ENCODE measurements at regions of chr13 and their contacts with region 1.

Region 1: DNA sequence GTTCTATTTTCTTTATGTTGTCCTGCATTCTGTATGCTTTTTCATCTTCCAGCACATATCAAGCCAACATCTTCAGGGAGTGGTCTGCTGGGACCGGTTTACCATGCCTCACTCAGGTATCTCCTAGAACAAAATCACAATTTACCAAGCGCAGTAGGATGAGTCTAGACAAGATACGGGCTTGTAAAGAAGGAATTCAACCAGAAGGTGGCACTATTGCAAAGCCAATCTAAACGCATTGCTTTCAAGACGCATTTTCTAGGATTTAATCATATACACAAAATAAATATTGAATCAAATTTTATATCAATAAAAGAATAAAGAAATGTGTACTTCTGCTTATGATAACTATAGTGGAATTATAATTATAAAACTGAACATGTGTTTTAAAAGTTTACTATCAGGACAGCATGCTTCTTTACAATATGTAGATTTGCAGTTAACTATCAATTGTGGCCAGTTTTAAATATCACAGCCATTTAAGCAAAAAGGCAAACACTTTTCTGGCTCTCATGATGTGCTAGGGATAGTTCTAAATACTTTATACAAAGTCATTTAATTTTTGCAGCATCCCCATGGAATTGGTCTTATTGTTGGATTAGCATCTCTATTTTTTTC is 16.1 kb upstream of the TPP2 start:
- DNase-seq: peak in 7 of 9 donors; percentile 37 to 70 (median 63)
- ATAC-seq: peak; percentile 85
- H3K4me3 ChIP-seq: no peak overlapping the region
- H3K4me3 Mint-ChIP-seq: no peak overlapping the region
- H3K27ac ChIP-seq: no peak overlapping the region
- H3K27ac Mint-ChIP-seq: peak overlapping the region in 1 of 9 donors; percentile 57
- H3K4me1 ChIP-seq: peaks cover 0 to 8% of the 10 kb centered on the region in 2 donors
- H3K4me1 Mint-ChIP-seq: peaks cover 8 to 14% (median 10%) of the 10 kb centered on the region in 7 donors
- H3K27me3 ChIP-seq: no peaks in the 10 kb centered on the region
- H3K27me3 Mint-ChIP-seq: peaks cover 4 to 26% (median 5%) of the 10 kb centered on the region in 5 donors

Region 2: DNA sequence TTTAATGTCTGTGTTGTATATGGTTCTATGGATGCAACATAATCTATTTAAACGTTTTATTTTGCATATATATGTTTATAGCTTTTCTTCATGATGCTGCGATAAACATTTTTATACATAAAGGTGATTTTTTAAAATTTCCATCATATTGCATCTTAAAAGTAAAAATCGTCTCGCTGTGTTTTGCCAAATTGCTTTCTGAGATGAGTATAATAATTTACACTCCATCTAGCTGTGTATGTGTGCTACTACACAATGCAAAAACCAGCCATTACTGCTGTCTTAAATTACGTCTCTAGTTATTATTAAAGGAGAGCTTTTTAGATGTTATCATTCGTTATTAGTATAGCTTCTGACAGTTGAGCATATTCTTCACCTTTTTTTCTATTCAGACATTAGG is 77.0 kb after region 1 on chr13:
- CTCF ChIA-PET with region 1: interaction called, 4 read pairs
- POLR2A ChIA-PET with region 1: no interaction called
- intact Hi-C with region 1: loop called (anchors 2 kb)
- DNase-seq: peak in 1 of 9 donors; percentile 5
- ATAC-seq: no peak
- H3K4me3 ChIP-seq: no peak overlapping the region
- H3K4me3 Mint-ChIP-seq: no peak overlapping the region
- H3K27ac ChIP-seq: no peak overlapping the region
- H3K27ac Mint-ChIP-seq: no peak overlapping the region
- H3K4me1 ChIP-seq: no peaks in the 10 kb centered on the region
- H3K4me1 Mint-ChIP-seq: peaks cover 0 to 6% (median 0%) of the 10 kb centered on the region in 7 donors
- H3K27me3 ChIP-seq: no peaks in the 10 kb centered on the region
- H3K27me3 Mint-ChIP-seq: no peaks in the 10 kb centered on the region

Region 3: GRCh38 chr13:102724923-102725322 is 144.3 kb after region 1 on chr13:
- CTCF ChIA-PET with region 1: interaction called, 8 read pairs
- POLR2A ChIA-PET with region 1: no interaction called
- intact Hi-C with region 1: loop called (anchors 1 kb)
- DNase-seq: peak in 1 of 9 donors; percentile 6
- ATAC-seq: peak; percentile 54
- H3K4me3 ChIP-seq: no peak overlapping the region
- H3K4me3 Mint-ChIP-seq: no peak overlapping the region
- H3K27ac ChIP-seq: no peak overlapping the region
- H3K27ac Mint-ChIP-seq: no peak overlapping the region
- H3K4me1 ChIP-seq: no peaks in the 10 kb centered on the region
- H3K4me1 Mint-ChIP-seq: peaks cover 0 to 3% (median 0%) of the 10 kb centered on the region in 7 donors
- H3K27me3 ChIP-seq: no peaks in the 10 kb centered on the region
- H3K27me3 Mint-ChIP-seq: peaks cover 8 to 40% (median 26%) of the 10 kb centered on the region in 5 donors

Region 4: DNA sequence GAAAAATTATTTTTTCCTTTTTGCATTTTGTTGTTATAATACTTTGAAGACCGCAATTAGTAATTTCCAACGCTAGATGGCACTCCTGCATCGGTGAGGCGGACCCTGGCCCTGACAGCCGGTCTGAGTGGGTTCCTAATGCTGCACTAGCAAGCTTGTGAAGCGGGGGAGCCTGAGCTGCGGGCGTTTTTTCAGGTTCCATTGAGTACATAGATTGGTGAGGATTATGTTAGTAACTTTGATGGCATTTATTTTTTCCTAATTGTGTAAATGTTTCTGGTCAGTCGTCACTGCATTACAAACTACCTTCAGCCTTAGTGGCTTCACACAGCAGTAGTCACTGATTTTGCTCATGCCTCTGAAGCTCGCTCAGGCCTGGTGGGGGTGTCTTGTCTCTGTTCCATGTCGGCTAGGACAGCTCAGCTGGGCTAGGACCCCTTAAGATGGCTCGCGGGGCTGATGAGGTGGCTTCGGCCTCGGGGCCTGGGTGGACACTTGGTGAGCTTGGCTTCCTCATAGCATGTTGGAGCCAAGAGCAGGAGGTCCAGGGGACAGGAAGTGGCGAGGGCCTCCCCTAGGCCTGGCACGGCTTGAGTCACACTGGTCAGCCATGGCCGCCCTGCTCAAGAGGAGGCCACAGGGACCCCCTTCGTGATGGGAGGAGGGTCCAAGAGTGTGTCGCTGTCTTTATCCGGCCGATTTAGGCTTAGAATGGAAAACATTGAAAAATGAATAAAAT is 290.2 kb after region 1 on chr13:
- CTCF ChIA-PET with region 1: interaction called, 5 read pairs
- POLR2A ChIA-PET with region 1: no interaction called
- intact Hi-C with region 1: loop called in 1 of 2 experiments (anchors 1 kb)
- DNase-seq: peak in 6 of 9 donors; percentile 27 to 51 (median 46)
- ATAC-seq: peak; percentile 77
- H3K4me3 ChIP-seq: no peak overlapping the region
- H3K4me3 Mint-ChIP-seq: no peak overlapping the region
- H3K27ac ChIP-seq: no peak overlapping the region
- H3K27ac Mint-ChIP-seq: peak overlapping the region in 7 of 9 donors; percentile 21 to 87 (median 36)
- H3K4me1 ChIP-seq: no peaks in the 10 kb centered on the region
- H3K4me1 Mint-ChIP-seq: peaks cover 11 to 31% (median 25%) of the 10 kb centered on the region in 7 donors
- H3K27me3 ChIP-seq: no peaks in the 10 kb centered on the region
- H3K27me3 Mint-ChIP-seq: no peaks in the 10 kb centered on the region

Region 5: DNA sequence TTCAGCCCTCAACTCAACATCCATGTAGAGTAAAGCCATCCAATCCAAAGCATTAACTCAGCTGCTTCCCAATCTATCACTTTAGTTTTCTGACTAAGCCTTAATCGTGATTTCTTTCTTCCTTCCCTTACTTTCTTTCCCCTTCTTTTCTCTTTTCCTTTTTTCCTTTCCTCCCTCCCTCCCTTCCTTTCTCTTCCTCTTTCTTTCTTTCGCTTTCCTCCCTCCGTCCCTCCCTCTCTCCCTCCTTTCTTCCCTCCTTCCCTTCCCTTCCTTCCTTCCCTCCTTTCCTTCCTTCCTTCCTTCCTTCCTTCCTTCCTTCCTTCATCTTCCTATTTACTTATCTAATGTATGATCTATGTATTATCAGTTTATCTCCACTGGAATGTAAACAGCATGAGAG is 336.4 kb after region 1 on chr13:
- CTCF ChIA-PET with region 1: no interaction called
- POLR2A ChIA-PET with region 1: no interaction called
- intact Hi-C with region 1: loop called in 1 of 2 experiments (anchors 2 kb)
- DNase-seq: no peak
- ATAC-seq: no peak
- H3K4me3 ChIP-seq: no peak overlapping the region
- H3K4me3 Mint-ChIP-seq: no peak overlapping the region
- H3K27ac ChIP-seq: no peak overlapping the region
- H3K27ac Mint-ChIP-seq: no peak overlapping the region
- H3K4me1 ChIP-seq: no peaks in the 10 kb centered on the region
- H3K4me1 Mint-ChIP-seq: peaks cover 0 to 5% (median 0%) of the 10 kb centered on the region in 7 donors
- H3K27me3 ChIP-seq: peaks cover 0 to 3% of the 10 kb centered on the region in 2 donors
- H3K27me3 Mint-ChIP-seq: peaks cover 19 to 65% (median 54%) of the 10 kb centered on the region in 5 donors

Measured in naive thymus-derived CD4-positive, alpha-beta T cell (primary cell).